ENCODE measurements at regions of chr22 and their contacts with region 1.

Region 1: GRCh38 chr22:47370448-47371262 is 608.2 kb downstream of the TBC1D22A start:
- DNase-seq: no peak
- ATAC-seq: no peak
- H3K4me3 ChIP-seq: no peak overlapping the region
- H3K27ac ChIP-seq: no peak overlapping the region
- H3K4me1 ChIP-seq: no peaks in the 10 kb centered on the region
- H3K27me3 ChIP-seq: peaks cover 0 to 80% (median 37%) of the 10 kb centered on the region in 7 donors
- CTCF ChIP-seq: no peak

Region 2: DNA sequence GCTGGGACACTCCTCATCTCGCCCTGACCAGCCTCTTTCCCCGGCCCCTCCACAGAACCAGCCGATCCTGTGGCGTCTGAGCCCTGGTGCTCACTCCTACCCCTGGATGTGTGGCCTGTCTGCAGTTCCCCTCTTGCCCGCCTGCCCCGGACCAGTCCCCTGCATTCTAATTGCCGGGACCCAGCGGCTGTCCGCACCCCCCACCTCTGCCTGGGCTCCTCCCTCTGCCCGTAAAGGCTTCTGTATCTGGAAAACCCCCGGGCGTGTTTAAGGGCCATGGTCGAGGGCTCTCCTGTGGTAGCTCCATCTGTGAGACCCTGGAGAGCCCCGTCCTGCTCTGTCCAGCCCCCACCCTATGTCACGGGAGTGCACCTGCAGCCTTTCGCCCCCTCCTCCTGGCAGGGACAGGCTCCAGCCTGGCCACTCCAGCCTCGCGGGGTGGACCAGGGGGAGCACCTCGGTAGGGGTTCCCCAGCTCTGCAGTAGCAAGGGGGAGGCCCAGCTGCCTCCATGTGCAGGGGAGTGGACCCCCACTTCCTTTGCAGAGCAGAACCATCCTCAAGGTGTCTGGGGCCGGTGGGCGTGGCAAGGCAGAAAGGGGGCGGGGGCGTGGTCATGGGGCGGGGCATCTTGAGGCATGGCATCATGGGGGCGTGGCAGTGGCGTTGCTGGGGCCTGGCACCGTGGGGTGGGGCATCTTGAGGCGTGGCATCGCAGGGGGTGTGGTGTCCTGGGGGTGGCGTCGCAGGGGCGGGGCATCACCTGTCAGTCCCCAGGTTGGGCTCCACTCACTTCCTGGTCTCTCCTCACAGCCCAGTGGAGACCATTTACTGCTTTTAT is 177.8 kb before region 1 on chr22:
- intact Hi-C with region 1: no loop called
- DNase-seq: no peak
- ATAC-seq: peak in 2 of 8 donors; percentile 10 to 18
- H3K4me3 ChIP-seq: no peak overlapping the region
- H3K27ac ChIP-seq: no peak overlapping the region
- H3K4me1 ChIP-seq: no peaks in the 10 kb centered on the region
- H3K27me3 ChIP-seq: peaks cover 0 to 6% (median 0%) of the 10 kb centered on the region in 7 donors
- CTCF ChIP-seq: no peak

Region 3: GRCh38 chr22:47408409-47408808 is 37.8 kb after region 1 on chr22:
- intact Hi-C with region 1: no loop called
- DNase-seq: no peak
- ATAC-seq: no peak
- H3K4me3 ChIP-seq: no peak overlapping the region
- H3K27ac ChIP-seq: no peak overlapping the region
- H3K4me1 ChIP-seq: no peaks in the 10 kb centered on the region
- H3K27me3 ChIP-seq: peaks cover 0 to 58% (median 32%) of the 10 kb centered on the region in 7 donors
- CTCF ChIP-seq: no peak

Region 4: DNA sequence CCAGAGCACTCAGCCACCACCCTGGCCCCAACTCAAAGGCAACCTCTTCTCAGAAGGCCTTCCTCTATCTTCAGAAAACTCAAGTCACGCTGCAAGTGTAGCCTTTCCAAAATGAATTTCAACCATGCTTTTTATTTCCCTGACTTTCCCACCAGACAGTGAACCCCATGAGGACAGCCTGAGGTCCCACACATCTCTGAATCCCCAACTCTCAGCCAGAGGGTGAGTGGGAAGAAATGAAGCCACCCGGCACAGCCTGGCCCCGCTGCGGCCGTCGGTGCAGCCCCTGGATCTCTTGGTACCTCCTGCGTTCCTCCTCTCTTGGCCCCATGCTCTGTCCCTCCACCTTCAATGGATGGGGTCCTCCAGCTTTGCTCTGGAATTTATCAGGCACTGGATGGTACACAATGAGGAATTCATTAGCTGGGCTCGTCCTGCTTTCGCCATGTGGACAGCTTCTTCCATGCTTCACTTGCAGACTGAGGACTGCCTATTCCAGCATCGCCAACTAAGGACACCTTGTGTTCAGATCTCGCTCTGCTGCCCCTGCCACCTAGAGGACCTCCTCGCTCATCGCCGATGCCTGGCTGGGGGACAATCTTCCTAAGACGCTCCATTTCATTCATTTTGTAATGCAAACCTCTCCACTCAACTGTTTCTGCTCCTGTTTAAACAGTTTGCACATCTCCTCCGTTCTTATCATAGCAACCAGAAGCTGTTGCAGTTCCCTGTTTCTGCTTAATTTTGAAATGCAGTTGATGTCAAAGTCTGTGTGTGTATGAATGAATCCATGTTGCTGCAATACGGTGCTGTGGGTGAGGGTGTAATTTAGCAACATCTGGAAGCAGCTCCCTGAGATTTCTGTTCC is 63.9 kb after region 1 on chr22:
- intact Hi-C with region 1: loop called in 1 of 10 experiments (anchors 10 kb)
- DNase-seq: no peak
- ATAC-seq: no peak
- H3K4me3 ChIP-seq: no peak overlapping the region
- H3K27ac ChIP-seq: no peak overlapping the region
- H3K4me1 ChIP-seq: no peaks in the 10 kb centered on the region
- H3K27me3 ChIP-seq: peaks cover 0 to 18% (median 0%) of the 10 kb centered on the region in 7 donors
- CTCF ChIP-seq: no peak

Measured in heart right ventricle (tissue), 16 donors.